Activated CD4-positive, alpha-beta T cell treated with anti-CD3 and anti-CD28 coated beads, Interleukin-2, amount 10 ng/mL, durations not matched to agents 24 days and 14 days (primary cell): ENCODE measurements at regions of chr20 and their contacts with region 1.

Region 1: GRCh38 chr20:51695574-51696303 is 72.5 kb downstream of the ATP9A start:
- DNase-seq: peak; percentile 56
- H3K4me3 Mint-ChIP-seq: peak overlapping the region; percentile 48
- H3K27ac Mint-ChIP-seq: peak overlapping the region; percentile 59
- H3K4me1 Mint-ChIP-seq: peaks cover 19% of the 10 kb centered on the region
- H3K27me3 Mint-ChIP-seq: peaks cover 18% of the 10 kb centered on the region

Region 2: DNA sequence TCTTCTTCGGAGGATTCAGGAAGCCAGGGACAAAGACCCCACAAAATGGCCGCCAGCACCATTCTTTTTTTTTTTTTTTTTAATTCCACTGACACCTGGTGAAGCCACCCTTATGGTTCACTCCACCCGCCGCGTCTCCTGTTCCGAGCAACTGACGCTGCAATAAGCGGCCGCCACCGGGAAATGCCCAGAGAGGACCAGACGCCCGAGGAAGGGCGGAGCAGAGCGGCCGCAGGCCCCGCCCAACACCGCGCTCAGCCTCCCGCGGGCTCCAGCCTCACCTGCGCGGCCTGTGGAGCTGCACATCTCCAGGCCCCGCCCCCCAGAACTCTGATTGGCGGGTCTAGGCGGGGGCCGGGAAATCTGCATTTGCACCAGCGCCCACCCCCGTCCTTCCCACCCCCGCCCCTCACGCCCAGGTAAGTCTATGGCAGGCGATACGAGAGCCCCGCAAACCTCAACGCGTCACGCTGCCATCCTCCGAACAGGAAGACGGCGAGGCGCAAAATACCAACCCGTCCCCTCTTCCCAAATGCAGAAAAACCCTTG is 71.3 kb after region 1 on chr20:
- intact Hi-C with region 1: loop called (anchors 5 kb)
- DNase-seq: peak; percentile 87
- H3K4me3 Mint-ChIP-seq: peak overlapping the region; percentile 75
- H3K27ac Mint-ChIP-seq: peak overlapping the region; percentile 31
- H3K4me1 Mint-ChIP-seq: peaks cover 5% of the 10 kb centered on the region
- H3K27me3 Mint-ChIP-seq: peaks cover 36% of the 10 kb centered on the region

Region 3: GRCh38 chr20:52060794-52061714 is 365.3 kb after region 1 on chr20:
- intact Hi-C with region 1: no loop called
- DNase-seq: no peak
- H3K4me3 Mint-ChIP-seq: no peak overlapping the region
- H3K27ac Mint-ChIP-seq: no peak overlapping the region
- H3K4me1 Mint-ChIP-seq: no peaks in the 10 kb centered on the region
- H3K27me3 Mint-ChIP-seq: peaks cover 2% of the 10 kb centered on the region